Activated CD4-positive, alpha-beta memory T cell treated with anti-CD3 and anti-CD28 coated beads for 36 hours (primary cell): ENCODE measurements at regions of chr11 and their contacts with region 1.

Region 1: DNA sequence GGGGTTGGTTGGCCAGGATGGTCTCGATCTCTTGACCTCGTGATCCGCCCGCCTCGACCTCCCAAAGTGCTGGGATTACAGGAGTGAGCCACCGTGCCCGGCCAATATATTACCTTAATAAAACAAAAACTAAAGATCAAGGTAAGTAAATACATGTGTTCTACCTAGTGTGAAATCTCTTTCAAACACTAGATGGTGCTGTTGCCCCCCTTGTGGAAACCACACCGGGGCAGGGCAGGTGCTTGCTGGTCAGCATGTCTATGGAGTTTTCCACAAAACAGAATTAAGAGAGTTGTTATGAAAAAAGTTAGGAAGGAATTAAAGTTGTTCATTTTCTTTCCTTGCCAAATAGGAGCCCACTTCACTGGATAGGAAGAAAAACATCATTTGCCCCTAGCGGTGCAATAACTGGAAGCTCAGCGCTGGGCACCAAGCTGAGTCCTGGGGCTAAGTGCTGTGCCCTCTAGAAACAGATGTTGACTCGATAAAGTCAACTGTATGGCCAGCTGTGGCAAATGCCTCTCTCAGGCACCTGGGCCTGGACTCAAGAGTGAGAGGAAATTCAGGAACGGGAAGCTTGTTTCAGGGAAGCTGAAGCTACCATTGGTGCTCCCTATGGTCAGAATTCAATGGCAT is 6.3 kb upstream of the KCNJ5 start:
- DNase-seq: peak; percentile 71
- H3K4me3 Mint-ChIP-seq: no peak overlapping the region
- H3K27ac Mint-ChIP-seq: no peak overlapping the region
- H3K4me1 Mint-ChIP-seq: no peaks in the 10 kb centered on the region
- H3K27me3 Mint-ChIP-seq: peaks cover 36% of the 10 kb centered on the region

Region 2: GRCh38 chr11:128530118-128531074 is 354.4 kb before region 1 on chr11:
- CTCF ChIA-PET with region 1: no interaction called
- POLR2A ChIA-PET with region 1: no interaction called
- intact Hi-C with region 1: no loop called
- DNase-seq: no peak
- H3K4me3 Mint-ChIP-seq: no peak overlapping the region
- H3K27ac Mint-ChIP-seq: no peak overlapping the region
- H3K4me1 Mint-ChIP-seq: peaks cover 60% of the 10 kb centered on the region
- H3K27me3 Mint-ChIP-seq: no peaks in the 10 kb centered on the region

Region 3: GRCh38 chr11:128868841-128869580 is 15.8 kb before region 1 on chr11:
- CTCF ChIA-PET with region 1: interaction called, 20 read pairs
- POLR2A ChIA-PET with region 1: no interaction called
- intact Hi-C with region 1: no loop called
- DNase-seq: peak; percentile 44
- H3K4me3 Mint-ChIP-seq: no peak overlapping the region
- H3K27ac Mint-ChIP-seq: no peak overlapping the region
- H3K4me1 Mint-ChIP-seq: no peaks in the 10 kb centered on the region
- H3K27me3 Mint-ChIP-seq: no peaks in the 10 kb centered on the region

Region 4: DNA sequence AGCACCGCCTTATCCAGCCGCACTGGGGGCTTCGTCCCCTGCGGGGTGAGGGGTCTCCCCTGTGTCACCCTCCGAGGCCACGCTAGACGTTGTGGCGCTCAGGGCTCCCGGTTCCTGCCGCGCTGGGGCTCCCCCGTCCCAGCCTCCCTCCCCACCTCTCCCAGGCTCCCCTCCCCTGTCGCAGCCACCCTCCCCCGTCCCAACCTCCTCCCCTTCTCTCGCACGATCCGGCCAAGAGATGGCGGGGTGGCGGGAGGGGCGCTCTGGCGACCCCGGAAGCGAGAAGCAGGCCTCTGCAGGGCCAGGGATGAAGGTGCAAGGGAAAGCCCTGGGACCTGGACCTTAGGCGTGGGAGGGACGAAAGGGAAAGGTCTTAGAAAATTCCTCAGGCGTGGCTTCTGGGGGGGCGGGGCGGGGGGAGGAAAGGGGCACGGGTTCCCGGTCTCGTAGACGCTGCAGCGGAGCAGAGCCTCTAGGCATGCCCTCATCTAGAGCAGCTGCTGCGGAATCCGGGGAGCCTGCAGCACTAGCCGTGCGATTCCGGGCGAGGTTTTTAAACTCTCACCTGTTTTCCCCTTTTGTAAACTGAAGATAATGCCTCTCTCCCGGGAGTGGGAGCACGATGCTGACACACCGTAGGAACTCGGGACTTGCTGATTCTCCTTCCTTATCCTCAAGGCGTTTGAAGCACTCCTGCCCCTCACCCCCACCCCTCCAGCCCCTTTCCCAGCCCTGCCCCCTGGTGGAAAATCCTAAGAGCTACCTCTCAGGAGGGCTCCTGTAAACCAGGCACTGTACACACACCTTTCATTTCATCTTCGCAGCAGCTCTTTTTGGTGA is 20.7 kb after region 1 on chr11:
- CTCF ChIA-PET with region 1: interaction called, 79 read pairs
- POLR2A ChIA-PET with region 1: no interaction called
- intact Hi-C with region 1: loop called (anchors 1 kb)
- DNase-seq: peak; percentile 61
- H3K4me3 Mint-ChIP-seq: peak overlapping the region; percentile 71
- H3K27ac Mint-ChIP-seq: no peak overlapping the region
- H3K4me1 Mint-ChIP-seq: peaks cover 15% of the 10 kb centered on the region
- H3K27me3 Mint-ChIP-seq: peaks cover 39% of the 10 kb centered on the region

Region 5: GRCh38 chr11:128956401-128957201 is 71.8 kb after region 1 on chr11:
- CTCF ChIA-PET with region 1: interaction called, 243 read pairs
- POLR2A ChIA-PET with region 1: no interaction called
- intact Hi-C with region 1: loop called (anchors 1 kb)
- DNase-seq: no peak
- H3K4me3 Mint-ChIP-seq: no peak overlapping the region
- H3K27ac Mint-ChIP-seq: no peak overlapping the region
- H3K4me1 Mint-ChIP-seq: peaks cover 2% of the 10 kb centered on the region
- H3K27me3 Mint-ChIP-seq: peaks cover 15% of the 10 kb centered on the region

Region 6: GRCh38 chr11:129013737-129014475 is 129.1 kb after region 1 on chr11:
- CTCF ChIA-PET with region 1: no interaction called
- POLR2A ChIA-PET with region 1: no interaction called
- intact Hi-C with region 1: no loop called
- DNase-seq: no peak
- H3K4me3 Mint-ChIP-seq: no peak overlapping the region
- H3K27ac Mint-ChIP-seq: no peak overlapping the region
- H3K4me1 Mint-ChIP-seq: peaks cover 1% of the 10 kb centered on the region
- H3K27me3 Mint-ChIP-seq: peaks cover 2% of the 10 kb centered on the region

Region 7: DNA sequence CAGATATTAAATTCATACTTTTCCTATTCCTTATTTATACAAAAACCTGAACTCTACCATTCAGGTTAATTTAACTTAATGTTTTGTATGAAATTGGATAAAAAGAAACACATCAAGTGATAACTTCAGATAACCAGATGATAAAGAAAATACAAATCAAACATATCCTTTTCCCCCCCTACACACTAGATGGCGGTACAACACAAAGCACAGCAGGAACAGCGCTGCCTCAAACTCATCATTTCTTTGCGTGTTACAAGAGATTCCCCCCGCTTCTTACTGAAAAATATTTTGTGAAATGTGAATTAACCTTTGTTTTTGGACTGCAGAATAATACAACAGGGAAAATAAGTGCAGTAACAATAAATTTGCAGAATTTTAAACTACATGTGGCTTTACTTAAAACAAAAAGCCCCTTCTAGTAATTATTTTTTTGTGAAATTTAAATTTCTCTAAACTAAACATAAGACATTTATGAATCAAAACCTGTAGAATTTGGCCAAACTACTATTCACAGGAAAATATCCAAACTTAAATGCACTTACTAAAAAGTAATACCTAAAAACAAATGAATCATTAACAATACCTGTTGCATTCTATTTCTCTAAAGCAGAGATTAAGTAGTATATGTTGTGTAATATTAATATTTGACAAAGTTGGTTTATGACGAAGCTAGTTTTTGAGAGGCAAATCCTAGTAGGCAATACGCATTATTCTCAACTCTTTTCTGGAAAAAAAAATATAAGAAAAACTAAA is 233.0 kb after region 1 on chr11:
- CTCF ChIA-PET with region 1: interaction called, 4 read pairs
- POLR2A ChIA-PET with region 1: no interaction called
- intact Hi-C with region 1: loop called (anchors 2 kb)
- DNase-seq: peak; percentile 51
- H3K4me3 Mint-ChIP-seq: no peak overlapping the region
- H3K27ac Mint-ChIP-seq: no peak overlapping the region
- H3K4me1 Mint-ChIP-seq: no peaks in the 10 kb centered on the region
- H3K27me3 Mint-ChIP-seq: no peaks in the 10 kb centered on the region

Region 8: DNA sequence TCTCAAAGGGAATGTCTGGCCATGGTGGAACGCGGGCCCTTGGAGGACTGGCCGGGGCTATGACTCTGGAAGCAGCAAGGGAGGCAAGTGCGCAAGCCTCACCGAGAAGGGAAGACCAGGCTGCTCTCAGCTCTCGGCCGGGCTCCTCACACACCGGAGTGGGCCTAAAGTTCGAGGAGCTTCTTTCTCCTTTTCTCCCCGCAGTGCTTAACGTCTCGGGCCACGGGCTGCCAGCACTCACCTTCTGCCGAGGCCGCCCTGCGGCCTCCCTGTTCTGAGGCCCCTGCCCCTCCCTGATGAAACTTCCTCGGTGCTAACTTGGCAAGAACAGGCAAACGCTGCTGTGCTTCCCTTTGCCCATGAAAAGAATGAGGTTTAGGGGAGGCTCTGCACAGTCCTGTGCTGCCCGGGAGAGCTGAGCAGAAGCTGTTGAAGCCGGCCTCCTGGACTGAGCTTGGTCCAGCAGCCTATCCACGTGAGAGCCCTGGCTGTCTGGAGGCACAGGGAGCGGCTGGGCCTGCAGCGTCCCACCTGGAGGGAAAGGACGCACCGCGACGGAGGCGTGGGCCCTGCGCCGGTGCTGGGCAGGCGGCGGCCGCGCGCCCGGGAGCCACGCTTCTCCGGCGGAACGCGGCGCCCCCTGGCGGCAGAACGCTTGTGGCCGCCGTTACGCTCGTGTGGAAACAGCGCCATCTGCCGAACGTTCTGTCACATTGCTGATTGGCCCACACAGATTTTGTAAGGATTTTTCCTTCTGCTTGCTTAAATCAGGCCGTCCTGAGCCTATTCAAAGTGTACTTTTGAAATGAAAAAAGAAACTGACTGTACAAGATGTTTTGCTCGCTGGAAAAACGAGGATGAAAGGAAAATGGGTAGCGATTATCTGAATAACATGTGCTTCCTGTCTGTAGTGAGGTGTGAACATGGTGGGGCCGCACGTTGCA is 865.8 kb after region 1 on chr11:
- CTCF ChIA-PET with region 1: no interaction called
- POLR2A ChIA-PET with region 1: no interaction called
- intact Hi-C with region 1: loop called (anchors 5 kb)
- DNase-seq: peak; percentile 85
- H3K4me3 Mint-ChIP-seq: no peak overlapping the region
- H3K27ac Mint-ChIP-seq: no peak overlapping the region
- H3K4me1 Mint-ChIP-seq: peaks cover 7% of the 10 kb centered on the region
- H3K27me3 Mint-ChIP-seq: peaks cover 3% of the 10 kb centered on the region